ENCODE measurements at regions of chr3 and their contacts with region 1.

Region 1: DNA sequence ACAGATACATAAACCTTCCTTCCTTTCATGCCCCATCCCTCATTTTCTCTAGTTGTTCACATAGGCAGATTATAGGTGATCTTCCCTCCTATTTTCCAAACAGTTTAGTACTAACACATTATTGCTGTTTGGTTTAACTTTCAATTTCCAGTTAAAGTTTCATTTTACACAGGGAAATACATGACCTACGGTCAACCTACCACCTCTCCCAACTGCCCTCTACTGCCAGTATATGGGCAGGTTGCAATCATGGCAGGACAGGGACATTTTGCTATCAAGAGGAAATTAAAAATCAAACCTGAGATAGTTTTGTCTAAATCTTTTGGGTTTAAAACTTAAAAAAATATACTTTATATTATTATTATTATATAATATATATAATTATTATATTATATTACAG is 26.1 kb upstream of the TFDP2 start:
- DNase-seq: no peak
- H3K4me3 ChIP-seq: no peak overlapping the region
- H3K27me3 ChIP-seq: no peaks in the 10 kb centered on the region
- CTCF ChIP-seq: no peak

Region 2: GRCh38 chr3:142243134-142243533 is 67.7 kb after region 1 on chr3:
- CTCF ChIA-PET with region 1: no interaction called
- POLR2A ChIA-PET with region 1: interaction called, 23 read pairs
- DNase-seq: no peak
- H3K4me3 ChIP-seq: no peak overlapping the region
- H3K27me3 ChIP-seq: peaks cover 3% of the 10 kb centered on the region
- CTCF ChIP-seq: no peak

Measured in BJ (cell line).